ENCODE measurements at regions of chr12 and their contacts with region 1.

Region 1: GRCh38 chr12:110100315-110100970 is 23.7 kb upstream of the IFT81 start:
- DNase-seq: peak; percentile 77
- H3K4me3 Mint-ChIP-seq: no peak overlapping the region
- H3K27ac Mint-ChIP-seq: no peak overlapping the region
- H3K4me1 Mint-ChIP-seq: peaks cover 6% of the 10 kb centered on the region
- H3K27me3 Mint-ChIP-seq: no peaks in the 10 kb centered on the region

Region 2: DNA sequence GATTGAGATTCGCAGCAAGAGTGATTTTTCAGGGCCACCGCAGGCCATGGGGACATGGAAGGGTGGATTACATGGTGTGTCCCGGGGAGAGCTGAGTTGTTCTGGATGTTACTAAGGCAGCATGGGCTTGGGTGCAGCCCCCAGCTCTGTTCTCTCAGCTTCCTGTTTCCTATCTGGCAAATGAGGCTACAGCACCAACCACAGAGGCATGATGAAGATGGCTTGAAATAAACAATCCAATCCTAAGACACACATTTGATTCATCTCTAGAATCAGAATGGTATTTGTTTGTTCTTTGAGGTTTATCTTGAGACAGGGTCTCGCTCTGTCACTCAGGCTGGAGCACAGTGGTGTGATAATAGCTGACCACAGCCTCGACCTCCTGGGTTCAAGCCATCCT is 241.7 kb before region 1 on chr12:
- CTCF ChIA-PET with region 1: interaction called, 5 read pairs
- intact Hi-C with region 1: loop called (anchors 1 kb)
- DNase-seq: no peak
- H3K4me3 Mint-ChIP-seq: no peak overlapping the region
- H3K27ac Mint-ChIP-seq: peak overlapping the region; percentile 65
- H3K4me1 Mint-ChIP-seq: no peaks in the 10 kb centered on the region
- H3K27me3 Mint-ChIP-seq: no peaks in the 10 kb centered on the region

Region 3: DNA sequence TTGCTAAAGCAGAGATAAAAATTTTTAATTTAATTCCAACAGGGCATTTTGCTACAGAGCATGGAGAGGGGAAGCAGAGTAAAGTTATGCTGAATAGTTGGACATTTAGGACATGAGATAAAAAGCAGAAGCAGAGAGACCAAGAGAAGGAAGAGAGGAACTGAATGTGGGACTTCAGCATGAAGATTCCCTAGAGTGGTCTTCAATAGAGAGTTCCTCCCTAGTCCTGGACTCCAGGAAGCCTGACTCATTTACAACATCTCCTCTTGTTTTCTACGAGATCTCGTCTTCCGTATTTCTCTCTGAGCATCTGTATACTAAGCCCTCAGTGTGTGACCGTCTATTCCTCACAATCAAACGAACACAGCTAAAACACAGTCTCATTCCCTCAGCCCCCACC is 11.5 kb before region 1 on chr12:
- CTCF ChIA-PET with region 1: interaction called, 11 read pairs
- intact Hi-C with region 1: no loop called
- DNase-seq: no peak
- H3K4me3 Mint-ChIP-seq: no peak overlapping the region
- H3K27ac Mint-ChIP-seq: no peak overlapping the region
- H3K4me1 Mint-ChIP-seq: no peaks in the 10 kb centered on the region
- H3K27me3 Mint-ChIP-seq: peaks cover 4% of the 10 kb centered on the region

Region 4: DNA sequence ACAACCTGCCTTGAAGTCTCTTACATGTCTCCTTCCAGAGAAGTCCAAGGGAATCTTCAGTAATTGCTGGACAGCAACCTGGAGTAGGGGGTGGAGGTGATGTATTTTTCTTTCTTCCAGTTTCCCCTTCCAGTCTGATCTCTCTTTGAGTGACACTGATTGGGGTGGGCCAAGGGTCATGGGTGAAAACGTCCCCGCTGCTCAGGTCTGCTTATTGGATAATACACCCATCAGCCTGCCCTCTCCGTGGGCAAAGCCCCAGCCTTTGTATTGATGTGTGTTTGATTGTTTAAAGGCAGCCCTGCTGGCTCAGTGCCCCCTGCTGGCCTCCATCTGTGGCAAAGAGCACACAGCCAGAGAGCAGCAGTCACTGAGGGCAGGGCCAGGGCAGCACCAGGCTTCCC is 144.9 kb after region 1 on chr12:
- CTCF ChIA-PET with region 1: interaction called, 4 read pairs
- intact Hi-C with region 1: loop called (anchors 1 kb)
- DNase-seq: peak; percentile 56
- H3K4me3 Mint-ChIP-seq: no peak overlapping the region
- H3K27ac Mint-ChIP-seq: no peak overlapping the region
- H3K4me1 Mint-ChIP-seq: no peaks in the 10 kb centered on the region
- H3K27me3 Mint-ChIP-seq: no peaks in the 10 kb centered on the region

Region 5: GRCh38 chr12:110431957-110432587 is 331.6 kb after region 1 on chr12:
- CTCF ChIA-PET with region 1: interaction called, 24 read pairs
- intact Hi-C with region 1: loop called (anchors 1 kb)
- DNase-seq: peak; percentile 31
- H3K4me3 Mint-ChIP-seq: no peak overlapping the region
- H3K27ac Mint-ChIP-seq: peak overlapping the region; percentile 36
- H3K4me1 Mint-ChIP-seq: peaks cover 3% of the 10 kb centered on the region
- H3K27me3 Mint-ChIP-seq: no peaks in the 10 kb centered on the region